HEK293 (cell line): ENCODE measurements at regions of chr7 and their contacts with region 1.

Region 1: DNA sequence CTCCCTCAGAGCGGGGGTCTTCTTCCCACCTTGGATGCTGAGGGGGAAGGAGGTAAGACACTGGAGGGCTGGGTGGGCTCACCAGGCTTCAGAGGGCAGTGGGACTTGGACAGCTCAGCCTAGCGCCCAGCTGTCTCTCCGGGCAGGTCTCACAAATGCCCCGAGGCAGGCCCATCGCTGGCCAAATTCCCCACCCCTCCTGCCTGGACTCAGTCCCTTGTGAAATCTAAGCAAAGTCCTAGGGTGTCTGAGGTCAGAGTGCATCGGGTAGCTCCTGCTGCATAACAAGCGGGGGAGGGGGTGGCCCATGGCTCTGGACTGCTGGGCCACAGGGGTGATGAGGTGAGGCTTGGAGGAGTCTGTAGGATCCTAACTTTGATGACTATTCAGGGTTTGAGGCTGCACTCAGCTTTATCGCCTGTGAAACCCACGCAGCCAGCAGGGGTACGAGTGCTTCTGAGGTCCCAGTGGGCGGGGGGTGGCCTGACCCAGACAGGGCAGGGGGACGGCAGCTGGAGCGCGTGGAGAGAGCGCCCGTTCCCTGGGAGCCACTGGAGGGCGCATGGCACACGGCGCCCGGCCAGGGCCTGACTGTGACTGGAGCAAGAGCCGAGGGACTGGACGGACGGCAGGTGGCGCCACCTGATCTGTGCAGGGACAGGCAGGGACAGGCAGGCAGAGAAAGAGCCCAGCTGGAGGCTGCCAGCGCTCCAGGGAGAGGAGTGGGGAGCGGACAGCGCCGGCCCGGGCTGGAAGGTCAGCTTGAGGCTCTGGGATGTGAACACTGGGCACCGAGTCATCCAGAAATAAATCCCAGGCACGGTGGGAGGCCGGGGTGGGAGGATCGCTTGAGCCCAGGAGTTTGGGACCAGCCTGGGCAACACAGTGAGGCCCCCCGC is 10.0 kb downstream of the CYP2W1 start:
- H3K4me3 ChIP-seq: no peak overlapping the region
- H3K27ac ChIP-seq: no peak overlapping the region
- H3K4me1 ChIP-seq: no peaks in the 10 kb centered on the region; the same call in 1 of the 2 replicates
- CTCF ChIP-seq: peak; percentile 100

Region 2: DNA sequence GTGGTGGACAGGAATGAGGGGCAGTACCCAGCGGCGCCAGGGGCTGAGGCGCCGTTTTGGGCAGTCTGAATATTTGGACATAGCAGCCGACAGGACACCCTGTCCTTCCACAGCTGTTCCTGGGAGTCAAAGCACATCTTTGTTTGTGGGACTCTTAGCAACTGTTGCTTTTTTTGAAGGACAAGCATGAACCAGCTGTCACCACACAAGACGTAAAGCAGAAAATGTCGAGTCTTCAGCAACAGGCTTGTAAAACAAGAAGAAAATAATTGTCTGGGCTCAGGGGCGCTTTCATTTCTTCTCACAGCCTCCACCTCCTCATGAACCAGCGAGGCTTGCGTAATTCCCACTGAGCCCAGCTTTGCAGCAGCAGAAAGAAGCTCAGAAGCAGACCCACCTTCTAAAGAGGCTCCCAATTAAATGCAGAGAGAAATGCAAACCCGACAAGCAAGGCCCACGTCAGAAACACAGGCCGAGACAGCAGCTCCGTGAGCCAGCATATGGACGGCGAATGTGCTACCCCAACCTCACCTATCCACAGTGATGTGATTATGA is 335.3 kb before region 1 on chr7:
- CTCF ChIA-PET with region 1: no interaction called
- POLR2A ChIA-PET with region 1: no interaction called
- H3K4me3 ChIP-seq: no peak overlapping the region
- H3K27ac ChIP-seq: no peak overlapping the region
- H3K4me1 ChIP-seq: no peaks in the 10 kb centered on the region
- CTCF ChIP-seq: no peak

Region 3: DNA sequence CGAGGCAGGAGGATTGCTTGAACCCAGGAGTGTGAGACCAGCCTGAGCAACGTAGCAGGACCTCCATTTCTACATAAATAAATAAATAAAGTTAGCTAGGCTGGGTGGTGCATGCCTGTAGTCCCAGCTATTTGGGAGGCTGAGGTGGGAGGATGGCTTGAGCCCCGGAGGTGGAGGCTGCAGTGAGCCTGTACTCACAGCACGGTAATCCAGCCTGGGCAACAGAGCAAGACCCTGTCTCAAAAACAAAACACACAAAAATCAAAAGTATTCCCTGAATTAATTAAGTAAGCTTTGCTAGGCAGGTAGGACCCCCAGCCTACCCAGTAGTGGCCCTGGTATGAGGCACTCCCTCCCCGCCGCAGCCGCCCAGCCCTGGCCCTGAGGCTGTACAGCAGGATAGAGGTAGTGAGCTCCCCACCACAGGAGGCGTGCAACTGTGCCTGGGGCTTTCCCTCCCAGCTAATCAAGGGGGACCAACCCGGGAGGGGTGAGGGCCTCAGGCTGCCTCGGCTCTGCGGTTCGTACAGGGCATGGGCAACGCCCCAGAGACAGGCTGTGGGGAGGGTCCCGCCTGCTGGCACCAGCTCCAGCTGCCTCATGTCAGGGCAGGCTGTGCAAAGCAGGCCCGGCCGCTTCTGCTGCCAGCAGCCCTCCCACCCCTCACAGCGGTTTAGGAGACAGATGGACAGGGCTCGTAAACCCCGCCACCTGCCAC is 11.0 kb before region 1 on chr7:
- CTCF ChIA-PET with region 1: interaction called, 30 read pairs
- POLR2A ChIA-PET with region 1: no interaction called
- H3K4me3 ChIP-seq: no peak overlapping the region
- H3K27ac ChIP-seq: no peak overlapping the region
- H3K4me1 ChIP-seq: no peaks in the 10 kb centered on the region
- CTCF ChIP-seq: no peak

Region 4: DNA sequence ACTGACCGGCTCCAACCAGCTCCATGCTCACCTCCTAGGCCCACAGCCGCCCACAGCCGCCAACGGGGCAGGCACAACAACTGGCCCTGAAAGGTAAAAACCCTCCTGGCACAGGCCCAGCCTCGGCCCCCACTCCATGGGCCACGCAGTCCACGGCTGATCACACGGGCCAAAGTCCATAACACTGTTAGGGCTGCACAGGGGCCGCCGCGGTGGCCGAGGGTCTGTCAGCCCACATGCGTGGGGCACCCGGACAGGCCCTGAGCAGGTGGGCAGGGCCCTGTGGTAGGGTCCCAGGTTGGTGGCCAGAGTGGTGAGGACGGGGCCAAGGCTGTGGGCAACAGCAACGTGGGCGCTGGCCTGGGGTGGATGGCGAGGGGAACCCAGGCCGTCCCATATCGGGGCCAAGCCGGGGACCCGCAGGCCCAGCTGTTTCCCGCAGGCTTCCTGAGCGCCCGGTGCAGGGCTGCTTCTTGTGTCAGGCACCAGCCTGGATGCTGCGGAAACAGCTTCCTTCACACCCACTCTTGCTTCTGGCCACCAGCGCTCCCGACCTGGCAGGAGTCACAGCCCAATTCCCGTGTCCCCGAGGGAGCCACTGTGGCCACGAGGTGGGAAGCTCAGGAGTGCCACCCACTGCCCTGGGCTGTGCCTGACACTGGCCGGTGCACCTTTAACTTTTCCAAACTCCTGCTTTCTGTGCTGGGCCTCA is 19.2 kb after region 1 on chr7:
- CTCF ChIA-PET with region 1: interaction called, 10 read pairs
- POLR2A ChIA-PET with region 1: no interaction called
- H3K4me3 ChIP-seq: no peak overlapping the region
- H3K27ac ChIP-seq: no peak overlapping the region
- H3K4me1 ChIP-seq: no peaks in the 10 kb centered on the region
- CTCF ChIP-seq: no peak

Region 5: DNA sequence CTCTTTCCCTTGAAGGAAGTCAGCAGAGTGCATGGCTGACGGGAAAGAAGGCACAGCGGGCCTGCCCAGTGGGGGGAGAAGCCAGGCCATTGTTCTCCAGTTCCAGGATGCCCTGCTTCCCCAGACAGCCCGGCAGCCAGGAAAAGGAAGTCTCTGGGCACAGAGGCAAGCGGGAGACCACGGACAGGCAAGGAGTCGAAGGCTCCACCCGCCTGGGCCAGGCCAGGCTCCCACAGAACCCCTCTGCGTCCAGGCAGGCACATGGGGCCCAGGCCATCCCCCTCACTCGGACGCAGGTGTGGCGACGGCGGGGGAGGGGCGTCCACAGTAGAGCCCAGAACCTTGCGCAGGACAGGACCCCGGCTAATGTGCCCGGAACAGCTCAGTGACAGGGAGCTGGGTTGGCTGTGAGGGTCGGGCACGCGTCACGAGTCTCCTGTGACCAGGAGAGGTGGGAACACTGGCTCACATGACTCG is 60.1 kb after region 1 on chr7:
- CTCF ChIA-PET with region 1: interaction called, 15 read pairs
- POLR2A ChIA-PET with region 1: no interaction called
- H3K4me3 ChIP-seq: no peak overlapping the region
- H3K27ac ChIP-seq: no peak overlapping the region
- H3K4me1 ChIP-seq: no peaks in the 10 kb centered on the region
- CTCF ChIP-seq: no peak

Region 6: GRCh38 chr7:1065263-1066260 is 72.6 kb after region 1 on chr7:
- CTCF ChIA-PET with region 1: interaction called, 149 read pairs
- POLR2A ChIA-PET with region 1: interaction called, 12 read pairs
- H3K4me3 ChIP-seq: no peak overlapping the region
- H3K27ac ChIP-seq: no peak overlapping the region
- H3K4me1 ChIP-seq: no peaks in the 10 kb centered on the region
- CTCF ChIP-seq: peak; percentile 87

Region 7: DNA sequence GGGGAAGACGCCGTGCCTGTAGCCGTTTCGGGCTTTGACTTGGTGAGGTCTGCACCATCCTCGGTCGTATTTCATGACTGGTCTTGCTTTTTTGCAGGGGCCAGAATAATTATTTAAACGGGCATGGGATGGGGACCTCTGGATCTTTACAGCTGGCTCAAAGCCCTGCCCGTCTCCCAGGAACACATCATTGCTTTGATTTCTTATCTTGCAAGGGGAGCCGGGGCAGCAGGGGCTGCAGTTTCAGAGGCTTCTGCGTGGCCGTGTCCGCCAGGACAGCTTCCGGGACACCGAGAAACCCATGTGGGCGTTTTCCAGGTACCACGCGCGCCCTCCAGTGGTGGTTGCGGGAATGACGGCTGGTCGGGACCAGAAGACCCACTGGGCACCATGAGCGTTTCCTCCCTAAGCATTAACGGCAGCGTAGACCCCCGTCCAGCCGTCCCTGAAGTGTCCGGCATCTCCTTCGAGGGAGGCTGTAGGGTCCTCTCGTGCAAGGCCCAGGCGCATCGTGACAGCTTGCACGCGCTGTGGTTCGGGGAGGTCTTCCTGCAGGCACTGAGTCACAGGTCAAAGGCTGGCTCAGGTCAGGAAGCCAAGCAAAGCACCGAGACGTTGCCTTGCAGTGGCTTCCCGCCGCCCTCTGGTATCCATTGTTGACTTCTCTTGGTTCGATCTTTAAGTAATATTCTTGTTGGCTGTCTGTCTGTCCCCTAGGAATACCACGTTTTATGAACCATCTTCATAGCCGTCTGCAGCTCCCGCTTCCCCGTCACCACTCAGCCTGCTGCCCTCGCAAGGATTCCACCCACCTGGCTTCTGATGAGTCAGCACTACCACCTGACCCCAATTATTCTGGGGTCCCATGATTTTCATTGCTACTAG is 183.3 kb after region 1 on chr7:
- CTCF ChIA-PET with region 1: interaction called, 106 read pairs
- POLR2A ChIA-PET with region 1: interaction called, 3 read pairs
- H3K4me3 ChIP-seq: peak overlapping the region; percentile 35
- H3K27ac ChIP-seq: no peak overlapping the region
- H3K4me1 ChIP-seq: no peaks in the 10 kb centered on the region
- CTCF ChIP-seq: peak; percentile 82

Region 8: DNA sequence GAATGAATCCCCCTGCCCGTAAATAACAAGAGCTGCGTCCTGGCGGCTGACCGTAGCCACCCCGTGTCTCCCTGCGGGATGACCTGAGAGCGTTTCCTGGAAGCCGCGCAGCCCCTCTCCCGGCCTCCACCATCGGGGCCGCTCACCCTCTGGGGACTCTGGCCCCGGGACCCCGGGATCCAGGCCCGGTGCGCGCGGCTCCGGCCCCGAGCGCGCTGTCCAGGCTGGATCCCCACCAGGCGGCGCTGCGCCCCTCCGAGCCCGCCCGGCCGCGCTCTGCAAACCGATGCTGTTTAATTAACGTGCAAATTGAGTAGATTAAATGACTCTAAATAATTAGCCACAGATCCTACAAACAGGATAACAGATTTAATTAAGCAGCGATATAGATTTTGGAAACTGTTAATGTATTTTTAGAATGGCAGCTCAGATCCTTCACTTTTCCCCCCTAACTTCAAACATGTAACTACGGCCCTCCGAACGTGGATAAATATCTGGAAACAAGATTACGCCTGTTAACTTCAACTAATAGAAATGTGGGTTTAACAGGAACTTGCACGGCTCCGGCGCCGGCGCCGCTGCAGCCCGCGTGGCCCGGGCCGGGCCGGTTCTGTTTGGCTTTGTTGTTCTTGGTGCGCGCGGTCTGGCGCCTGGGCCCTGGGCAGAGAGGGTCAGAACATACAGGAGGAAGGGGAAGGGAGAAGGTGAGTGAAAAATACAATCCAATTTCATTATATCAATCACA is 232.7 kb after region 1 on chr7:
- CTCF ChIA-PET with region 1: no interaction called
- POLR2A ChIA-PET with region 1: no interaction called
- H3K4me3 ChIP-seq: no peak overlapping the region
- H3K27ac ChIP-seq: no peak overlapping the region
- H3K4me1 ChIP-seq: no peaks in the 10 kb centered on the region
- CTCF ChIP-seq: no peak